Activated naive CD4-positive, alpha-beta T cell treated with anti-CD3 and anti-CD28 coated beads, Interleukin-2, amount 10 ng/mL, durations not matched to agents 7 days and 5 days (primary cell): ENCODE measurements at regions of chr20 and their contacts with region 1.

Region 1: DNA sequence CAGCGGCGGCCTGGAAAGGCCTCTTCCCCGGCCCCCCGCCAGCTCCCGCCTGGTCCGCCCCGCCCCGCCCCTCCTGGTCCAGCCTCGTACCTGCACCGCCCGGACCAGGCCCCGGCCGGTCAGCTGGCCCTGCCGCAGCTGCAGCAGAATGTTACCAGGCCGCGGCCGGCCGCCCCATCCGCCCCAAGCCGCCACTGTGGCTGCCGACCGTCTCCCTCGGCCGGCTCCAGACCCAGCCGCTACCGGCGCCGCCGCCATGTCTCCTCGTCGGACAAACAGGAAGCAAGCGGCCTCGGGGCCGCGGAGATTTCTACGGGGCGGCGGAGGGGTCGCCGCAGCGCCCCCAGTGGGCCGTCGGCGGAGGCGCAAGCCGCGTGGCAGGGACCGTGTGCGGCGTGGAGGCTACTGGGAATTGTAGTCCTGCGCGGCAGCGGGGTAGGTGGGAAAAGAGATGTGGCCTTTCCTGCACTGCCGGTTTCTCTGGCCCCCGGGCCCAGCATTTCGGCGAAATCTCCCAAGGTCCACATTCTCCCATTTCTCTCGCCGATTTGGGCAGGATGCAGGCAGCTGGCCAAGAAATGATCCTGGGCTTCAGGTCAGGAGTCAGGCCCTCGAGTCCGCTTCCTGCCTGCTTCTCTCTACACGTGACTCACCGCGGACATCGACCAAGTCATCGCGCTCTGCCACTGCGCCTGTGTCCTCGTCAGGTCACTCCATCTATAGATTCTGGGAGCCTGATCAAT is at the start of gene TRPC4AP:
- DNase-seq: peak; percentile 91
- H3K4me3 Mint-ChIP-seq: peak within 1 kb of the TSS; percentile 92
- H3K27ac Mint-ChIP-seq: peak within 1 kb of the TSS; percentile 93
- H3K4me1 Mint-ChIP-seq: peaks cover 49% of the 10 kb centered on the region
- H3K27me3 Mint-ChIP-seq: no peaks in the 10 kb centered on the region

Region 2: DNA sequence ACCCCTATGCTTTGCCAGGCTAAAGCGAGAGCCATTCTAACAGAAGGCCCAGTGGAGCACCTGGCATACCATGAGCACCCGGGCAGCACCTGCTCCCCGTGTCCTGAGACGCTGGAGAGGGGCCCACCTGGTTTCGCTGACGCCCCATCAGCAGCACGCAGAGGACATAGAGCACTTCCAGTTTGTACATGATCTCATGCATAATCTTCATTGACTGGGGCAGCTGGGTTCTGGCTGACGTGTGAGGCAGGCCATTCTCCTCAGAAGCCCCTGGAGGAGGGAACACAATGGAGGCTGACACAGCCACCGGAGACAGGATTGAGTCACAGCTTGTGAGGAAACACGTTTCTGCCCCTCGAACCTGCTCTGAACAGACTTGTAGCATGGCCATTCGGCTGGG is 71.6 kb before region 1 on chr20:
- CTCF ChIA-PET with region 1: no interaction called
- DNase-seq: no peak
- H3K4me3 Mint-ChIP-seq: no peak overlapping the region
- H3K27ac Mint-ChIP-seq: no peak overlapping the region
- H3K4me1 Mint-ChIP-seq: no peaks in the 10 kb centered on the region
- H3K27me3 Mint-ChIP-seq: no peaks in the 10 kb centered on the region

Region 3: DNA sequence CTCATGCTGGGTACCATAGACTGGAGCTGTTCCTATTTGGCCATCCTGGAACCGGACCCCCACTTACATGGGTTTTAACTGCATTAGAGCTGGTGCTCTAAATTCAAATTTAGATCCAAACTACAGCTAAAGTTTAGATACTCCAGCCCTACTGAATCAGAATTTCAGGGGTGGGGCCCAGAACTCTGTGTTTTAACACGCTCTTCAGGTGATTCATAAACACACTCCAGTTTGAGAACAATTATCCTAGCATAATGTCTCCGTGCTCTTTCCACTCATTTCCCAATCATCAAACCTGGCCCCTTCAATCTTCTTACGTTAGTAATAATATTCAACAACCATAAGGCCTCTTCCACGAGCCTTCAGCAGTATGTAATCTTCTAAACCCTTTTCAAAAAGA is 15.4 kb before region 1 on chr20:
- CTCF ChIA-PET with region 1: no interaction called
- DNase-seq: no peak
- H3K4me3 Mint-ChIP-seq: no peak overlapping the region
- H3K27ac Mint-ChIP-seq: no peak overlapping the region
- H3K4me1 Mint-ChIP-seq: peaks cover 18% of the 10 kb centered on the region
- H3K27me3 Mint-ChIP-seq: no peaks in the 10 kb centered on the region

Region 4: DNA sequence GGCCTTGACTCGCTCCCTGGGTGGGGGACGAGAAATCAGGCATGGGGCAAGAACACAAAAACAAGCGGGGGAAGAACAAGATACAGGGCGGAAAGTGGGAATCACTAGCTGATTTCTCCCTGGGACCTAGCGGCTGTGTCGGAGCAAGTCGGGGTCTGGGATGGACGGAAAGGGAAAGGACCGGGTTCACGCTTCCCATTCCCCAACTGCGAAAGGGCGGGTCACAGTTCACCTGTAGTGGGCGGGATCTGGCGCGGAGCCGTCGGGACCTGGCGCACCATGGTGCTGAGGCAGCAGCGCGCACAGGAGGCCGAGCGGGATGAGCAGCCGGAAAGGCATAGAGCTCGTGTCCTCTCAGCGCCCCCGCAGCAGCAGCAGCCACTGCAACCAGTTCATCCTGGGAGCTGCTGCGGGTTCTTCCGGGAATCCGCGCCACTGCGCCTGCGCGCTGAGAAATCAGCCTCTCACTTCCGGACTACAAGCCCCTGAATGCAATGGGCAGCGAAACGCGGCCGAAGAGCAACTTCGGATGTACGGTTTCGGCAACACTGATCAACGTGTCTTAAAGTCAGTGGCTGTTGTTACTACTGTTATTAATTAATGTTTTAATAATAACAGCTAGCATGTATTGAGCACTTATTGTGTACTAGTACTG is 54.4 kb after region 1 on chr20 and contains the start of gene EDEM2:
- CTCF ChIA-PET with region 1: interaction called, 14 read pairs
- DNase-seq: peak; percentile 95
- H3K4me3 Mint-ChIP-seq: peak within 1 kb of the TSS; percentile 86
- H3K27ac Mint-ChIP-seq: peak within 1 kb of the TSS; percentile 90
- H3K4me1 Mint-ChIP-seq: peaks cover 36% of the 10 kb centered on the region
- H3K27me3 Mint-ChIP-seq: no peaks in the 10 kb centered on the region

Region 5: GRCh38 chr20:35181731-35182130 is 89.0 kb after region 1 on chr20:
- CTCF ChIA-PET with region 1: no interaction called
- DNase-seq: no peak
- H3K4me3 Mint-ChIP-seq: no peak overlapping the region
- H3K27ac Mint-ChIP-seq: no peak overlapping the region
- H3K4me1 Mint-ChIP-seq: no peaks in the 10 kb centered on the region
- H3K27me3 Mint-ChIP-seq: no peaks in the 10 kb centered on the region

Region 6: DNA sequence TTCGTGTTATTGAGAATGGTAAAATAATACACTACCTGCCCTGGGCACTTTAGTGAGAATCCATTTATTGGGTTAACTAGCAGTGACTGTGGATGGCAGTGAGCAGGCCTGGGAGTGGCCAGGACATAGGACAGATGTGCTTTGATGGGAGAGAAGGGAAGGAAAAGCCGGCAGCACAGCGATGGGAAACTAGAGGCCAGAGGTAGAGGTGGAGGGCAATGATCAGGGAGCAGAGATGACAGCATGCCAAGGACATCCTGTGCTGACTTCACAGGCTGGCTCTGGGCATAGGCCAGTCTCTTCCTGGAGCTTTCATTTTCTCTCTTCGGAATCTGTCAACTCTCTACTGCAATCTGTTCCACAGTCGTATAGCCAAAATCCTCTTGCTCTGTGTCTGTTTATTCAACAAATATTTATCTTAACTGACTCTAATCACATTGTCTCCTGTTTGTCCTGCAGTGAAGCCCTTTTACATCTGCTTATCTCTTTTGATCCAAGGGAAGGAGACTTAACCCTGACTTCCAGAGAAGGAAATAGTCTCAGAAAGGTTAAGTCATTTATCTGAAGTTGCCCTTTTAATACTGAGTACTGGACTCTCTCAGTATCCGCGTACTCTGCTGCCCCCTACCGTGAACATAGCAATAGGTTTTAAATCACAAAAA is 115.4 kb after region 1 on chr20:
- CTCF ChIA-PET with region 1: interaction called, 27 read pairs
- DNase-seq: peak; percentile 87
- H3K4me3 Mint-ChIP-seq: no peak overlapping the region
- H3K27ac Mint-ChIP-seq: no peak overlapping the region
- H3K4me1 Mint-ChIP-seq: no peaks in the 10 kb centered on the region
- H3K27me3 Mint-ChIP-seq: no peaks in the 10 kb centered on the region

Region 7: DNA sequence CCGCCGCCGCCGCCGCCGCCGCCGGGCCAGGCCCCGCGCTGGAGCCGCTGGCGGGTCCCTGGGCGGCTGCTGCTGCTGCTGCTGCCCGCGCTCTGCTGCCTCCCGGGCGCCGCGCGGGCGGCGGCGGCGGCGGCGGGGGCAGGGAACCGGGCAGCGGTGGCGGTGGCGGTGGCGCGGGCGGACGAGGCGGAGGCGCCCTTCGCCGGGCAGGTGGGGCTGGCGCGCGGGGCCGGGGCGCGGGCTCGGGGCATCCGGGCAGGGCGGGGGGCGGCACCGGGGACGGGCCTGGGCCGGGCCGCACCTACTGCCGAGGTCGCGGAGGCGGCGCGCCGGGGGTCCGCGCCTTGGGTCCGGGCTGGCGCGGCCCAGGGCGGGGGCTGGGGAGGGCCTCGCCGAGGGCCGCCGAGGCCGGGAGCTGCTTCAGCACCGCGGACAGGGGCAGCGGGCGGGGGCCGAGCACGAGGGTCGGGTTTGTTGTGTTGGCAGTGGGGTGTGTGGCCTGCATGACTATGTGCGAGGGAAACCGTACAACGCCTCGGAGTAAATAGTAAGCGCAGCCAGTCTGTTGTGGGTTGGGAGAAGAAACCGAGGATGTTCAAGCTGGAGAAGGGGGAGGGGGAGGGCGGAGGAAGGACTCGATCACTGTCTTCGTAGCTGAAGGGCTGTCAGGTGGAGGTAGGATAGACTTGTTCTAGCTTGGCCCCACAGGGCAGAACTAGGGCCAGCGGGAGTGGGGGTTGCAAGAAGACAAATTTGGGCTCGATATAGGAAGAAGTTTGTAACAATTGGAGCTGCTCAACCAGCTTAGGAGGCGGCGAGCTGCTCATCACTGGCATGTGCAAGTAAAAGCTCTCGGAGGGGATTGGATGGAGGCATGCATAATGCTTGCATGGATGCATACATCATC is 134.3 kb after region 1 on chr20:
- CTCF ChIA-PET with region 1: no interaction called
- DNase-seq: peak; percentile 67
- H3K4me3 Mint-ChIP-seq: peak overlapping the region; percentile 53
- H3K27ac Mint-ChIP-seq: no peak overlapping the region
- H3K4me1 Mint-ChIP-seq: peaks cover 13% of the 10 kb centered on the region
- H3K27me3 Mint-ChIP-seq: peaks cover 47% of the 10 kb centered on the region

Region 8: DNA sequence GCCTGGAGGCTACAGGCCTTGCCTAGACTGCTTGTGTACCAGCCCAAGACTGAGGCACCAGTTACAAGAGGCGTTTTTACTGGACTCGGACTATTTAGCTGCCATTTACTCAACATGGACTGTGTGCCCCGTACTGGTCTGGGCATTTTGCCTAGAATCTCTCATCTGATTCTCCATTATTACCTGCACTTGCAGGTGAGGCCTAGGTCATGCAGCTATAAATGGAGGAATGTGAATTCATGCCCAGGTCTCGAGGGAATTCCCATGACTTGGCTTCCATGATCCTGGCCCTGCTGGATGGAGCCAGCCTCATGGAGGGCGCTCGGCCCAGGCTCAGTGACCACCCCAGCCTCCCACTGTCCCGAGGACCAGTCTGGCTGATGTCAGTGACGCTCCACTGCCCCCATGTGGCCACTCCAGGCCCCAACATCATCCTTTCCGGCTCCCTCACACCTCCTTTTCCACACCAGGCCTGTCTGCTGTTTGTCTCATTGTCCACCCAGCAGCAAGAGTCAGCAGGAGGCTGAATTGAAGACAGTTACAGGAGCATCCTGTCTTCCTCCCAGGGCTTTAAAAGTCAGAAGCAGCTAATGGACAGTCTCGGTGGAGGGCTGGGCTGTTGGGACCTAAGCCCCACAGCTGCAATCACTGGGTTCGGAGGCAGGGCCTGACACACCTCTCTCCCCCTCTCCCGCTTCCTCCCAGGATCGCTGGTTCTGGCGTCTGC is 176.5 kb after region 1 on chr20:
- CTCF ChIA-PET with region 1: interaction called, 17 read pairs
- DNase-seq: peak; percentile 70
- H3K4me3 Mint-ChIP-seq: no peak overlapping the region
- H3K27ac Mint-ChIP-seq: no peak overlapping the region
- H3K4me1 Mint-ChIP-seq: no peaks in the 10 kb centered on the region
- H3K27me3 Mint-ChIP-seq: no peaks in the 10 kb centered on the region